Sigmoid colon (tissue), 7 donors: ENCODE measurements at regions of chr16 and their contacts with region 1.

Region 1: GRCh38 chr16:9297437-9298113 is 206.1 kb downstream of the HAPSTR1 start:
- DNase-seq: peak; percentile 72
- H3K4me3 ChIP-seq: no peak overlapping the region
- H3K27ac ChIP-seq: no peak overlapping the region
- H3K4me1 ChIP-seq: no peaks in the 10 kb centered on the region
- H3K27me3 ChIP-seq: no peaks in the 10 kb centered on the region
- CTCF ChIP-seq: peak; percentile 44 to 71 (median 60)
- EP300 ChIP-seq: no peak
- POLR2A ChIP-seq: no peak

Region 2: DNA sequence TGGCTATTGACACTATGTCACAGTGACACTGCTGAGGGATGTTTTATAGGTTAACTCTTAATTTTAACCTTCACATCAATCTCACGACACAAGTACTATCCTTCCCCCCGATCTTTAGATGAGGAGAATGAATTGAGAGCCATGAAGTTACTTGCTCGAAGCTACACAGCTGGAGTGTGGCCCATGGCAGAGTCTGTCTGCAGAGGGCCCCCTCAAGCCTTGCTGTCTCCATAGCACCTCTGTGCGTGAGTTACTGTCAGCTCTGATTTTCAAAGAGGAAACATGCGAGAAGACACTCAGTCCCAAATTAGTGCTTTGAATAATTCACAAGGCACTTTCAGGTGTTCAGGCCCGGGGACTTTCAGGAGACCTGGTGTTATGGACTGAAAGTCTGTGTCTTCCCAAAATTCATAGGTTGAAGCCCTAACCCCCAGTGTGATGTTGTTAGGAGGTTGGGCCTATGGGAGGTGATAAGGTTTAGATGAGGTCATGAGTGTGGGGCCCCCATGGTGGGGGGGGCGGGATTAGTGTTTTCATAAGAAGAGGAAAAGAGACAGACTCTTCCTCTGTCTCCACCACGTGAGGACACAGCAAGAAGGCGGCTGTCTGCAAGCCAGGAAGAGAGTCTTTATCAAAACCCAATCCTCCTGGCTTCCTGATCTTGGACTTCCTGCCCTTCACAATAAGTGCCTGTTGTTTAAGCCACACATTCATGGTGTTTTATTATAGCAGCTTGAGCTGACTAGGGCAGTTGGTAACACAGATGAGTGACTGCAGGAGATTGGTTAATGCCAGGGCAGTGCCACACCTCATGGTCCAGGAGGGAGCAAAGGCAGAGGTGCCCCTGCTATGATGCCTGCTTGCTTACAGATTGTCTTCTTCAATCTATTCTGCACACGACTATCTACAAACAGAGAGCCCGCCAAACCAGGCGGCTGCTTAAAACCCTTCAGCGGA is 75.6 kb after region 1 on chr16:
- intact Hi-C with region 1: no loop called
- DNase-seq: no peak
- H3K4me3 ChIP-seq: no peak overlapping the region
- H3K27ac ChIP-seq: no peak overlapping the region
- H3K4me1 ChIP-seq: no peaks in the 10 kb centered on the region
- H3K27me3 ChIP-seq: peaks cover 0 to 3% (median 0%) of the 10 kb centered on the region in 3 donors
- CTCF ChIP-seq: no peak
- EP300 ChIP-seq: no peak
- POLR2A ChIP-seq: no peak

Region 3: GRCh38 chr16:9518051-9518450 is 220.5 kb after region 1 on chr16:
- intact Hi-C with region 1: loop called (anchors 5 kb)
- DNase-seq: peak; percentile 82
- H3K4me3 ChIP-seq: no peak overlapping the region
- H3K27ac ChIP-seq: peak overlapping the region in 3 of 4 donors; percentile 37 to 48 (median 48)
- H3K4me1 ChIP-seq: peaks cover 2 to 22% (median 19%) of the 10 kb centered on the region in 4 donors
- H3K27me3 ChIP-seq: no peaks in the 10 kb centered on the region
- CTCF ChIP-seq: no peak
- EP300 ChIP-seq: peak; percentile 7 to 65 (median 37)
- POLR2A ChIP-seq: no peak

Region 4: GRCh38 chr16:9736547-9736946 is 439.0 kb after region 1 on chr16:
- intact Hi-C with region 1: no loop called
- DNase-seq: no peak
- H3K4me3 ChIP-seq: no peak overlapping the region
- H3K27ac ChIP-seq: no peak overlapping the region
- H3K4me1 ChIP-seq: peaks cover 0 to 8% (median 3%) of the 10 kb centered on the region in 4 donors
- H3K27me3 ChIP-seq: no peaks in the 10 kb centered on the region
- CTCF ChIP-seq: no peak
- EP300 ChIP-seq: no peak
- POLR2A ChIP-seq: no peak

Region 5: GRCh38 chr16:10039220-10040096 is 741.9 kb after region 1 on chr16:
- intact Hi-C with region 1: loop called (anchors 10 kb)
- DNase-seq: no peak
- H3K4me3 ChIP-seq: peak overlapping the region in 3 of 4 donors; percentile 25 to 40 (median 28)
- H3K27ac ChIP-seq: peak overlapping the region in 1 of 4 donors; percentile 47
- H3K4me1 ChIP-seq: peaks cover 0 to 10% (median 7%) of the 10 kb centered on the region in 4 donors
- H3K27me3 ChIP-seq: no peaks in the 10 kb centered on the region
- CTCF ChIP-seq: peak; percentile 10 to 43 (median 22)
- EP300 ChIP-seq: no peak
- POLR2A ChIP-seq: no peak